ENCODE measurements at regions of chr14 and their contacts with region 1.

Region 1: DNA sequence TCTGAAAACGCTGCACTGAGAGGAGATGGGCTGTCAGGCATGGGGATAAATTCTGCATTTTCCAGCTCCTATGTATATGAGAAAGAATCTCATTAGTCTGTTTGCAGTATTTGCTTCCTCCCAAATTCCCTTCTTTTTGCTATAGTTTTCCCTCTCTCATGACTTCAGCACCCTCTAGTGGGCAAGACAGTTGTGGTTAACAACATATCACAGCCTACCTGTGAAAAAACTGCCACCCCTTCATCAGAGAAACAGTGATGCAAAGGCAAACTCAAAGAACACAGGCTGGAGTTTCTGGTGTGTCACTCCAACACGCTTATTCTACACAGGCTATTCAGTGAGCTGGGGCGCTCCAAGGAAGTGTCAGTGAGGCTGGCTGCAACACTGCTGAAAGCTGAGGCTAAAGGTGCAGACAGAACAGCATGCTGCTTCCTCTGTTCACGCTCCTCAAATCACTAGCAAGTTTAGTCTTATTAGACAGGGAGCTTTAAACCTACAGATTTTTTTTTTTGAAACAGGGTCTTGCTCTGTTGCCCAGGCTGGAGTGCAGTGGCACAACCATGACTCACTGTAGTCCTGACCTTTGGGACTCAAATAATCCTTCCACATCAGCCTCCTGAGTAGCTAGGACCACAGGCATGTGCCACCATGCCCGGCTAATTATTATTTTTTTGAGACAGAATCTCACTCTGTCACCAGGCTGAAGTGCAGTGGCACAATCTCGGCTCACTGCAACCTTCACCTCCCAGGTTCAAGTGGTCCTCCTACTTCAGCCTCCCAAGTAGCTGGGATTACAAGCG is 19.3 kb downstream of the ZC2HC1C start:
- DNase-seq: no peak
- H3K4me3 ChIP-seq: no peak overlapping the region
- H3K27ac ChIP-seq: no peak overlapping the region
- H3K4me1 ChIP-seq: peaks cover 0 to 21% (median 0%) of the 10 kb centered on the region in 3 donors
- H3K27me3 ChIP-seq: no peaks in the 10 kb centered on the region
- CTCF ChIP-seq: peak; percentile 61 to 88 (median 74)
- POLR2A ChIP-seq: no peak

Region 2: DNA sequence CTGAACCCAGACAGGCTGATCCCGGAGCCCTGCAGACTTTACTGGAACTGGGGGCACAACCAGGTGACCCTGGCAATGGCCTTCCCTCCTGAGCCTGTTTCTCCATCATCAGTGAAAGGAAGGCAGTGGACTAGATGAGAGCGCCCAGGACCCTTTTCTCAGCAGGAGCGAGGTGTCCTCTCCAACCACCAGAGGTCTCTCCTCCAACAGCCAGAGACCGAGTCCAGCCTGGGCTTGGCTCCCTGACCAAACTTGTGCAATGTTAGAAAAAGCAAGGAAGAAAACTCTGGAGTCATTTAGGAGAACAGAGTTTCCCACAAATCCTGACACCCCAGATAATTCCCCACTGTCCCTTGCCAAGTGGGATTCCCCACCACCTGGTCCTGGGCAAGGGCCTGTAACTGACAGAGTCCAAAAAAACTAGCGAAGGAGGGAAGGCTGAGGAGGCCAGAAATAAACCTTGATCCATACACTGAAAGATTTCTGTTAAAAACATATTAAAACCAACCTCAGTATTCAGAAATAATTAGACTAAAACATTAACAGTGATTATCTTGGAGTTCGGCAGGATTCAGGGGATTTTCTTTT is 174.7 kb before region 1 on chr14:
- intact Hi-C with region 1: loop called (anchors 10 kb)
- DNase-seq: no peak
- H3K4me3 ChIP-seq: no peak overlapping the region
- H3K27ac ChIP-seq: peak overlapping the region; percentile 15 to 71 (median 56)
- H3K4me1 ChIP-seq: peaks cover 24 to 91% (median 60%) of the 10 kb centered on the region in 3 donors
- H3K27me3 ChIP-seq: no peaks in the 10 kb centered on the region
- CTCF ChIP-seq: peak; percentile 35 to 78 (median 70)
- POLR2A ChIP-seq: no peak

Region 3: DNA sequence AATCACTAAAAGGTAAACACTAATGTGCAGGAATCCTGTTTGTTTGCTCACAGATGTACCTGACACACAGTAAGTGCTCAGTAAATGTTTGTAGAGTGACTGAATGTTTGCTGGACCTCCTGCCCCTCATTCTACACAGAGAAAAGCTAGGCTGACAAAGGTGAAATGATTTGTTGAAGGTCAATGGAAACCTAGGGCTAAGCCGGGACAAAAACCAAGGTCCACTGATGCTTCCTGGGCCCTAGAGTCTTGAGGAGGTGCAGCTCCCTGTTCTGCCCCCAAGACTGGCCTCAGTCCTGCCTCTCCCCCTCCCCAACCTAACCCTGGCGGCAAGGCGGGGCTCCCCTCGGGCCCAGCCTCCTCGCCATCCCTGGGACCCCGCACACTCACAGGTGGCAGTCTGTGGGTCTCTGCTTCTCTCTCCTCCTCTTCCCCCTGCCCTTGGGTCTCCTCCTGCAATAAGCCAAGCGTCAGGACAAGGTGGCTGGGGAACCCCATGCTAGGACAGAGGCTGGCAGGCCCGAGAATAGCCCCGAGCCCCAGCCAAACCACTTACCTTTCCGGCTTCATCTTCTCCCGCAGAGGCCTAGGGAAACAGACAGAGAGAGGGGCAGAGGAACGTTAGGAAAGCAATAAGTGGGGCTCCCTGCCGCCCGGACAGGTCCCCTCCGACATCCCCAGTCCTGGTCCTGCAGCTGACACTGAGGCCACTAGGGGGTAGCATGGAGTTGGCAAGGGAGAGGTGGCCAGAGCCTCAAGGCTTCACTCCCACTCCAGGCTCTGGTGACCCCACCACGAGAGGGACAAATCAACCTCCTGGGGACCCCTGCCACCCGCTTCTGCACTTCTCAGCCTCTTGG is 142.7 kb before region 1 on chr14:
- intact Hi-C with region 1: loop called (anchors 5 kb)
- DNase-seq: no peak
- H3K4me3 ChIP-seq: peak overlapping the region in 2 of 4 donors; percentile 13 to 28
- H3K27ac ChIP-seq: peak overlapping the region; percentile 20 to 76 (median 68)
- H3K4me1 ChIP-seq: peaks cover 33 to 67% (median 34%) of the 10 kb centered on the region in 3 donors
- H3K27me3 ChIP-seq: no peaks in the 10 kb centered on the region
- CTCF ChIP-seq: peak; percentile 65 to 94 (median 84)
- POLR2A ChIP-seq: no peak

Region 4: GRCh38 chr14:75002392-75003249 is 86.2 kb before region 1 on chr14 and contains the start of gene EIF2B2:
- intact Hi-C with region 1: loop called (anchors 10 kb)
- DNase-seq: peak; percentile 90
- H3K4me3 ChIP-seq: peak within 1 kb of the TSS; percentile 65 to 97 (median 80)
- H3K27ac ChIP-seq: peak within 1 kb of the TSS; percentile 81 to 94 (median 90)
- H3K4me1 ChIP-seq: peaks cover 21 to 36% (median 21%) of the 10 kb centered on the region in 3 donors
- H3K27me3 ChIP-seq: no peaks in the 10 kb centered on the region
- CTCF ChIP-seq: peak in 4 of 6 experiments; percentile 8 to 48 (median 38)
- POLR2A ChIP-seq: peak in 1 of 4 donors; percentile 54
- total RNA-seq, gene EIF2B2: 27.8 to 41.0 (median 39.0) TPM

Region 5: GRCh38 chr14:75016815-75017214 is 72.0 kb before region 1 on chr14:
- intact Hi-C with region 1: no loop called
- DNase-seq: no peak
- H3K4me3 ChIP-seq: no peak overlapping the region
- H3K27ac ChIP-seq: no peak overlapping the region
- H3K4me1 ChIP-seq: peaks cover 0 to 24% (median 3%) of the 10 kb centered on the region in 3 donors
- H3K27me3 ChIP-seq: no peaks in the 10 kb centered on the region
- CTCF ChIP-seq: no peak
- POLR2A ChIP-seq: no peak

Region 6: DNA sequence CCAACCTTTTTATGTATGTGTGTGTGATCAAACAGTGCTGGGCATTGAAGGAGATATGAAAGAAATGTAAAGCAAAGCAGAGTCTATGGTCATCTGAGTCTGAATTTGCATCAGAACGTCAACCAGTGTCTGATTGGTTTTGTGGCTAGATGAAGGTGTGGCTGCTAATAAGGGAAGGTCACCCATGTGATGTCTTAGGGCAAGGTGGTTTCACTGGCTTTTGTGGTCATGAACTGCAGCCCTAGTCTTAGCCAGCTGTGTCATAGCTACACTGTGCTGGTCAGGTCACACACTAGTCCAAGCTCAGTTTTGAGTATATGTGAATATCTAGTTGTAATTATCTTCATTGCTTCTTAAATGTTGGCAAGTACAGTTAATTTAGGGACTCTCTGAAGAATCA is 787.2 kb after region 1 on chr14:
- intact Hi-C with region 1: no loop called
- DNase-seq: no peak
- H3K4me3 ChIP-seq: no peak overlapping the region
- H3K27ac ChIP-seq: no peak overlapping the region
- H3K4me1 ChIP-seq: peaks cover 0 to 9% (median 3%) of the 10 kb centered on the region in 3 donors
- H3K27me3 ChIP-seq: no peaks in the 10 kb centered on the region
- CTCF ChIP-seq: no peak
- POLR2A ChIP-seq: no peak